Activated B cell treated with CpG ODN at 0.5 μM for 24 hours (primary cell): ENCODE measurements at regions of chr11 and their contacts with region 1.

Region 1: GRCh38 chr11:66157179-66157864 is 87.2 kb downstream of the PACS1 start:
- DNase-seq: no peak
- ATAC-seq: peak; percentile 40
- H3K4me3 Mint-ChIP-seq: no peak overlapping the region
- H3K27ac Mint-ChIP-seq: no peak overlapping the region
- H3K4me1 Mint-ChIP-seq: peaks cover 26% of the 10 kb centered on the region
- H3K27me3 Mint-ChIP-seq: no peaks in the 10 kb centered on the region
- CTCF ChIP-seq: no peak

Region 2: DNA sequence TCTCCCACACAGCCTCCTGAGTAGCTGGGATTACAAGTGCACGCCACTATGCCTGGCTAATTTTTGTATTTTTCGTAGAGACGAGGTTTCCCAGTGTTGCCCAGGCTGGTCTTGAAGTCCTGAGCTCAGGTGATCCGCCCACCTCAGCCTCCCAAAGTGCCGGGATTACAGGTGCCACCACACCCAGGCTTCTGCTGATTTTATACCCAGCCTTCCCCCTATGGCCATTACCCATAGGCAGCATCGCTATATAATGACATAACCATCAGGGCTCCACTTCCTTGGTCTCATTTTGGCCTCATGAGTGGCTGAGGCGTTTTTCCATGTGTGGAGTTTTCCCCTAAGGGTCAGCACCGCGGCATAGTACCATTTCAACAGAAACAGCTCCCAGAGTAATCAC is 50.6 kb after region 1 on chr11:
- CTCF ChIA-PET with region 1: no interaction called
- POLR2A ChIA-PET with region 1: no interaction called
- intact Hi-C with region 1: loop called (anchors 10 kb)
- DNase-seq: no peak
- ATAC-seq: no peak
- H3K4me3 Mint-ChIP-seq: no peak overlapping the region
- H3K27ac Mint-ChIP-seq: no peak overlapping the region
- H3K4me1 Mint-ChIP-seq: peaks cover 4% of the 10 kb centered on the region
- H3K27me3 Mint-ChIP-seq: no peaks in the 10 kb centered on the region
- CTCF ChIP-seq: no peak

Region 3: GRCh38 chr11:67544616-67545242 is 1387.4 kb after region 1 on chr11:
- CTCF ChIA-PET with region 1: no interaction called
- POLR2A ChIA-PET with region 1: no interaction called
- intact Hi-C with region 1: no loop called
- DNase-seq: no peak
- ATAC-seq: no peak
- H3K4me3 Mint-ChIP-seq: no peak overlapping the region
- H3K27ac Mint-ChIP-seq: no peak overlapping the region
- H3K4me1 Mint-ChIP-seq: no peaks in the 10 kb centered on the region
- H3K27me3 Mint-ChIP-seq: peaks cover 9% of the 10 kb centered on the region
- CTCF ChIP-seq: no peak